KBM-7 (cell line): ENCODE measurements at regions of chr10 and their contacts with region 1.

Region 1: GRCh38 chr10:102229810-102230263 is 3.7 kb downstream of the ELOVL3 start:
- DNase-seq: peak; percentile 79

Region 2: DNA sequence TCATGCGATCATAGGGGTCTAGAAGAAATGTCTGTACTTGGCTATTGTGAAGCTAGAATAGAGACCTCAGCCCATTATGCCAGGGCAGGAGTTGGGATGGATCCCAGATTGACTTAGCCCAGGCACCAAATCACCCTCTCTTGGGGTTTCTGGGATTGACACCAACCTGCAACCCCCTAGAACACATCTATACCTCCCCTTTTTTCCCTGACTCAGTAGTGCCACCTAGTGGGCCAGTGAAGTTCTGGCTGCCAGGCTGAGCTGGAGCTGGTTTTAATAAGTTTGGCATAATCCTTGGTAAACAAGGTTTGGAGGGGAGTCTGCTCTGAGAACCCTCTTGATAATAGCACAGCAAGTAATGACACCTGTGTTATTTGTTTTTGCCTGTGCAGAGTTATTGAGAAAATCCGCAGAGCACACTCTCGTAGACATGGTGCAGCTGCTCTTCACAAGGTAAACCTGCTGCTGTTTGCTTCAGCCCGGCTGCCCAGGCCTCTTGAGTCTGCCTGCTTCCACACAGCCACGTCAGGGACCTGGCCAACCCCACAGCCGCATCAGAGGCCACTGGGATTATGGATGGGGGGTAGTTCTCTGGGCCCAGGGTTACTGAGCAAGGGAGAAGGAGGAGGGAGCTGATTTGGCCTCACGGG is 122.4 kb after region 1 on chr10:
- in situ Hi-C with region 1: loop called (anchors 10 kb)
- DNase-seq: peak; percentile 89